ENCODE measurements at regions of chr7 and their contacts with region 1.

Region 1: GRCh38 chr7:47743965-47744591 is 162.2 kb upstream of the TNS3 start:
- DNase-seq: no peak
- ATAC-seq: peak; percentile 65
- H3K4me3 ChIP-seq: peak overlapping the region; percentile 43; the same call in 1 of the 2 replicates
- H3K27ac ChIP-seq: no peak overlapping the region
- H3K4me1 ChIP-seq: peaks cover 8% of the 10 kb centered on the region
- H3K27me3 ChIP-seq: no peaks in the 10 kb centered on the region
- CTCF ChIP-seq: no peak

Region 2: GRCh38 chr7:47688311-47689100 is 55.6 kb before region 1 on chr7:
- CTCF ChIA-PET with region 1: no interaction called
- POLR2A ChIA-PET with region 1: no interaction called
- intact Hi-C with region 1: loop called (anchors 10 kb)
- DNase-seq: no peak
- ATAC-seq: no peak
- H3K4me3 ChIP-seq: no peak overlapping the region
- H3K27ac ChIP-seq: no peak overlapping the region
- H3K4me1 ChIP-seq: peaks cover 22% of the 10 kb centered on the region
- H3K27me3 ChIP-seq: no peaks in the 10 kb centered on the region
- CTCF ChIP-seq: no peak

Measured in PC-3 (cell line).